ENCODE measurements at regions of chr17 and their contacts with region 1.

Region 1: DNA sequence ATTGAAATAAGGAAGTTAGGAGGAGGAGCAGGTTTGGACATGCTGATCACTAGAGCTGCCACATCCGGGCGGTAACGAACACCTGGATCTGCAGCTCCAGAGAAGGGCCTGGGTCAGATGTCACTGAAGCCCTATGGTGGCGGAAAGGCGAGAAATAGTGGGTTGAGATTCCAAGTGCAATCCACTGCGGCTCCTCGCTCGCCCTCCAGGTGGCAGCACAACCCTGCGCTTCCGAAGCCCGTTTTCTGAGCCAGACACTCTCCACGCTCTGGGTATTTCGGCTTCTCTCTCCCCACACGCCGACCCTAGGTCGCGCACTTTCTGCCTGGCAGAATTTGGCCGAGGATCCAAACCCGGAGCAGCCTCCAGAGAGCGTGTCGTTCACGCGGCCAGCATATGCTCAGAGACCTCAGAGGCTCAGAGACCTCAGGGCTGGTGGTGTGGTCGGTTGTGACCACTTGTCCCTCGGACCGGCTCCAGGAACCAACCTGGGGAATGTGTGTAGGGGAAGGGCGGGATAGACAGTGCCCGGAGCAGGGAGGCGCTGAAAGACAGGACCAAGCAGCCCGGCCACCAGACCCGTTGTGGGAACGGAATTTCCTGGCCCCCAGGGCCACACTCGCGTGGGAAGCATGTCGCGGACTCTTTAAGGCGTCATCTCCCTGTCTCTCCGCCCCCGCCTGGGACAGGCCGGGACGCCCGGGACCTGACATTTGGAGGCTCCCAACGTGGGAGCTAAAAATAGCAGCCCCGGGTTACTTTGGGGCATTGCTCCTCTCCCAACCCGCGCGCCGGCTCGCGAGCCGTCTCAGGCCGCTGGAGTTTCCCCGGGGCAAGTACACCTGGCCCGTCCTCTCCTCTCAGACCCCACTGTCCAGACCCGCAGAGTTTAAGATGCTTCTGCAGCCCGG is 744 bp upstream of the SLC2A4 start:
- DNase-seq: peak; percentile 77 to 93 (median 84)
- ATAC-seq: peak; percentile 90
- H3K4me3 ChIP-seq: peak overlapping the region; percentile 53
- H3K4me3 Mint-ChIP-seq: peak overlapping the region; percentile 85
- H3K27ac ChIP-seq: no peak overlapping the region
- H3K27ac Mint-ChIP-seq: peak overlapping the region; percentile 42
- H3K4me1 ChIP-seq: peaks cover 28% of the 10 kb centered on the region
- H3K4me1 Mint-ChIP-seq: peaks cover 26% of the 10 kb centered on the region
- H3K27me3 ChIP-seq: peaks cover 33 to 47% of the 10 kb centered on the region in 2 experiments
- H3K27me3 Mint-ChIP-seq: peaks cover 28% of the 10 kb centered on the region
- CTCF ChIP-seq: peak; percentile 86

Region 2: DNA sequence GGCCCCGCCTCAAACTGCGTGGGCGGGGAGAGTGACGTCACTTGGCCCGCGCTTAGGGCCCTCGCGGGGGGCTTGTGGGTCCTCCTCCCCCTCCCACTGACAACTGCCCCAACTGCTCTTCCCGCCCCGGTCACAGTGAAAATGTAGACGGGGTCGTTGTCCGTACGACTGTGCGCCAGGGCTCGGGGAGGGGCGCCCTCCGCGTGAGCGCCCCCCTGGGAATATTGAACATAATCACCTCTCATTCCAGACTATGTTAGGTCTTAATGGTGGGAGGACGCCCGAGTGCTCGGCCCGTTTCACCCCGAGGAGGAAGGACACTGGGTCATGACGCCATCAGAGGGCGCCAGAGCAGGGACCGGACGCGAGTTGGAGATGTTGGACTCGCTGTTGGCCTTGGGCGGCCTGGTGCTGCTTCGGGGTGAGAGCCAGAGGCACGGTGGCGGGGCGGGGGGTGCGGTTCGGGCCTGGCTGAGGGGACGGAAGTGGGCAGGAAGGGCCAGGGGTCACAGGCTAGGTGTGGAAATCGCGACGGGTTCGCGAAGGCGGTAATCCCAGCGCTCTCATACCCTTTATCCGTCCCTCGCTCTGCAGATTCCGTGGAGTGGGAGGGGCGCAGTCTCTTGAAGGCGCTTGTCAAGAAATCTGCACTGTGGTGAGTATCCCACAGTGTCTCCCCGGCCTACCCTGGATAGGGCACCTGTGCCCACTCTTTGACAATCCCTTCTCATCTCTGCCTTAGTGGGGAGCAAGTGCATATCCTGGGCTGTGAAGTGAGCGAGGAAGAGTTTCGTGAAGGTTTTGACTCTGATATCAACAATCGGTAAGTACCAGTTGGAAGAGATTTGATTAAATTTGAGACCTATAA is 28.4 kb before region 1 on chr17 and contains the start of gene ELP5:
- CTCF ChIA-PET with region 1: no interaction called
- POLR2A ChIA-PET with region 1: interaction called, 3 read pairs
- intact Hi-C with region 1: loop called in 1 of 2 experiments (anchors 1 kb)
- DNase-seq: peak; percentile 64 to 99 (median 80)
- ATAC-seq: peak; percentile 39
- H3K4me3 ChIP-seq: peak within 1 kb of the TSS; percentile 71
- H3K4me3 Mint-ChIP-seq: peak within 1 kb of the TSS; percentile 94
- H3K27ac ChIP-seq: peak within 1 kb of the TSS; percentile 99
- H3K27ac Mint-ChIP-seq: peak within 1 kb of the TSS; percentile 100
- H3K4me1 ChIP-seq: peaks cover 36% of the 10 kb centered on the region
- H3K4me1 Mint-ChIP-seq: peaks cover 45% of the 10 kb centered on the region
- H3K27me3 ChIP-seq: no peaks in the 10 kb centered on the region
- H3K27me3 Mint-ChIP-seq: no peaks in the 10 kb centered on the region
- CTCF ChIP-seq: peak; percentile 28
- total RNA-seq, gene ELP5: 20.1 to 21.3 TPM

Region 3: GRCh38 chr17:7296189-7296902 is 15.6 kb after region 1 on chr17:
- CTCF ChIA-PET with region 1: interaction called, 13 read pairs
- POLR2A ChIA-PET with region 1: interaction called, 9 read pairs
- intact Hi-C with region 1: loop called (anchors 1 kb)
- DNase-seq: peak; percentile 29 to 87 (median 58)
- ATAC-seq: peak; percentile 9
- H3K4me3 ChIP-seq: peak overlapping the region; percentile 10
- H3K4me3 Mint-ChIP-seq: peak overlapping the region; percentile 67
- H3K27ac ChIP-seq: no peak overlapping the region
- H3K27ac Mint-ChIP-seq: no peak overlapping the region
- H3K4me1 ChIP-seq: peaks cover 32% of the 10 kb centered on the region
- H3K4me1 Mint-ChIP-seq: peaks cover 19% of the 10 kb centered on the region
- H3K27me3 ChIP-seq: peaks cover 14 to 17% of the 10 kb centered on the region in 2 experiments
- H3K27me3 Mint-ChIP-seq: peaks cover 31% of the 10 kb centered on the region
- CTCF ChIP-seq: peak; percentile 98

Region 4: DNA sequence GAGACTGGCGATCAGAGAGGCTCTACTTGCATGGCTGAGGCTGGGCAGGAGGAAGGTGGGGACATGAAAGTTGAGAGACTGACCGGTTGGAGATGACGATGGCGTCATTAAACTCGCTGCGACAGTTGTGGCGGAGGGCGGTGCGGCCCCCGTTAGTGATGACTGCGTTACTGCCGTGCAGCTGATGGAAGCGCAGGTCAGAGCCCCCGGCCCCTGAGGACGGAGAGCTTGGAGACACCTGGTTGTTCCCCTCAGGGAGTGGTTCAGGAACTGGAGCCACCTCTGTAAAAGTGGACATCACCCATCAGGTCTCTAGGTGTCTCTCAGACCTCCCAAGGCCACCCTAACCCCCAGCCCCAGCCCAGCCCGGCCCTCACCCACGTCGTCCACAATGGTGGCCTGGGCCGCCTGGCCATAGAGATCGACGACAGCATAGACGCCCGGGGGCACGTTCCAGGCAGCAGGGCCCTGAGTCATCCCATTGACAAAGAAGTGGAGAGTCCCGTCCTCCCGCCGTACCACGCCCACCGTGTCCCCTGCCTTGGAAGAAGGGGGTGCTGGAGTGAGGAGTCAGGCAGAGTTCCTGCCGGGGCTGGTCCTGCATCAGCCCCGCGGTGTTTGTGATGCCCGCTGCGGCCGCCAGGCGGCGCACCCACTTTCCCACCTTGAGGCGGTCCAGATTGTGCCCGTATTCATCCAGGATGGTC is 43.1 kb after region 1 on chr17:
- CTCF ChIA-PET with region 1: interaction called, 4 read pairs
- POLR2A ChIA-PET with region 1: no interaction called
- intact Hi-C with region 1: loop called in 1 of 2 experiments (anchors 1 kb)
- DNase-seq: peak; percentile 45 to 79 (median 64)
- ATAC-seq: peak; percentile 52
- H3K4me3 ChIP-seq: no peak overlapping the region
- H3K4me3 Mint-ChIP-seq: peak overlapping the region; percentile 42
- H3K27ac ChIP-seq: no peak overlapping the region
- H3K27ac Mint-ChIP-seq: no peak overlapping the region
- H3K4me1 ChIP-seq: peaks cover 27% of the 10 kb centered on the region
- H3K4me1 Mint-ChIP-seq: peaks cover 16% of the 10 kb centered on the region
- H3K27me3 ChIP-seq: no peaks in the 10 kb centered on the region
- H3K27me3 Mint-ChIP-seq: no peaks in the 10 kb centered on the region
- CTCF ChIP-seq: peak; percentile 88

Region 5: DNA sequence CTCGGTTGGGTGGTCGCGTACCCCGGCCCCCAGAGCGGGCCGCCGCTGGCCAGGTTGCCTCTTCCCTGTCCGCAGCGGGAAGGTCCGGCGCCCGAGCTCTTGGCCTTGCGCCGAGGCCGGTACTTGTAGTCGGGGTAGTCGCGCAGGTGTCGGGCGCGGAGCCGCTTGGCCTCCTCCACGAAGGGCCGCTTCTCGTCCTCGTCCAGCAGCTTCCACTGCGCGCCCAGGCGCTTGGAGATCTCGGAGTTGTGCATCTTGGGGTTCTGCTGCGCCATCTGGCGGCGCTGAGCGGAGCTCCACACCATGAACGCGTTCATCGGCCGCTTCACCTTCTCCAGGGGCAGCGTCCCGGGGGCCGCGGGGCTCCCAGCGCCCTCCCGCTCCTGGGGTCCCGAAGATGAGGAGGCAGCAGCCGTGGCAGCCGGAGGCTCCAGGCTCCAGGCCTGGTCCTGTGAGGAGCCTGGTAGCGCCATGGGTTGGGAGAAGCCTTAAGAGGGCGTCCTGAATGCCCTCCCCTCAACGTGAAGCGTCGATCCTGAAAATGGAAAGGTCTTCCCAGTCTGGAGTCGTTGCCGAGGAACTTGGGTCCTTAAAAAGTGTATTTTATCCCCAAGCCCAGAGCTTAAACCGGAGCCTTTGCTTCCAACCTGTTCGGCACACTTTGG is 308.6 kb after region 1 on chr17:
- CTCF ChIA-PET with region 1: no interaction called
- POLR2A ChIA-PET with region 1: no interaction called
- intact Hi-C with region 1: loop called (anchors 2 to 5 kb)
- DNase-seq: peak; percentile 47 to 87 (median 62)
- ATAC-seq: peak; percentile 90
- H3K4me3 ChIP-seq: no peak overlapping the region
- H3K4me3 Mint-ChIP-seq: no peak overlapping the region
- H3K27ac ChIP-seq: no peak overlapping the region
- H3K27ac Mint-ChIP-seq: no peak overlapping the region
- H3K4me1 ChIP-seq: peaks cover 31% of the 10 kb centered on the region
- H3K4me1 Mint-ChIP-seq: peaks cover 7% of the 10 kb centered on the region
- H3K27me3 ChIP-seq: no peaks in the 10 kb centered on the region
- H3K27me3 Mint-ChIP-seq: no peaks in the 10 kb centered on the region
- CTCF ChIP-seq: peak; percentile 76